Colonic mucosa (tissue), 4 donors: ENCODE measurements at regions of chr3 and their contacts with region 1.

Region 1: DNA sequence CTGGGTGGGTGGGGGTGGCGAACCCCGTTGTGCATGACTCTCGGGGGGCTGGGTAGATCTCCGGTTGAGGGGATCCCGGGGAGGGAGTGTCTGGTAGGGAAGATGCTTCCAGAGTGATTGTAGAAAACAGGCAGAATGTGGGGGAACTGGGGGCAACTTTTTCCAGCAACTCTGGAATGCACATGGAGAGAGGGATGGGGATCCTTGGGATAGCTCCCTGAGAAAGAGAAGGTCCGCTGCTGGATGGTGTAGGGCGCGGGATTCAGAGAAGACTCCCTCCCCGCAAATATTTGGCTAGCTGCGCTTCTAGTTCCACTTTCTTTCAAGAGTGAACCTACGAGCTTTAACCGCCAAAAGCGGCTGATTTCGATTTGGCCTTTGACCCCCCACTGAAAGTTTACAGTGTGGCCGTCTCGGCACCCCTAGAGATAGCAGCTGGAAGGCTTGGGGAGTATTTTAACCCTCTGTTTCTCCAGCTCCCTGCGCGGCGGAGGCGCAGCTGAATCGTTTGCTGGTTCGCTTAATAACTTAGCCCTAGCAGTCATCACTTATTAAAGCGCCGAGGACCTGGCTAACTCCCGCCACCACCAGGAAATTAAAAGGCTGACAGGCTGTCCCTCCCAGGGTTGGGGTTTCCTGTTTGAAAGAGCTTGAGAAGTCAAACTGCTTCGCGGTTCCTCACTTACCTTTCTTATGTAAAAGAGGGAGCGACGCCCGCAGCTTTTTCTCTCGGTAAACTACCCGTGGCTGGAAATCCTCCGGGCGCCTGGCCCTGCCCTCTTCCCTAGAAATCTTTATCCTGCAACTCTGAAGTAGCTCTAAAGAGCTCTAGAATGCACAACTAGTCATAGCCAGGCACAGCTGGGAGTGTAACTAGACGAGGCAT is 1.2 kb downstream of the PHLDB2 start:
- DNase-seq: peak; percentile 66
- H3K4me3 ChIP-seq: peak overlapping the region; percentile 50
- H3K27ac ChIP-seq: peak overlapping the region; percentile 83
- H3K4me1 ChIP-seq: no peaks in the 10 kb centered on the region
- H3K27me3 ChIP-seq: no peaks in the 10 kb centered on the region
- CTCF ChIP-seq: peak; percentile 27

Region 2: GRCh38 chr3:111978493-111979433 is 118.5 kb after region 1 on chr3 and contains the start of gene ABHD10:
- intact Hi-C with region 1: loop called (anchors 10 kb)
- DNase-seq: peak; percentile 98
- H3K4me3 ChIP-seq: peak within 1 kb of the TSS; percentile 68
- H3K27ac ChIP-seq: peak within 1 kb of the TSS; percentile 64
- H3K4me1 ChIP-seq: peaks cover 9% of the 10 kb centered on the region
- H3K27me3 ChIP-seq: no peaks in the 10 kb centered on the region
- CTCF ChIP-seq: no peak
- total RNA-seq, gene ABHD10: 27.8 to 31.7 TPM